ENCODE measurements at regions of chr14 and their contacts with region 1.

Region 1: DNA sequence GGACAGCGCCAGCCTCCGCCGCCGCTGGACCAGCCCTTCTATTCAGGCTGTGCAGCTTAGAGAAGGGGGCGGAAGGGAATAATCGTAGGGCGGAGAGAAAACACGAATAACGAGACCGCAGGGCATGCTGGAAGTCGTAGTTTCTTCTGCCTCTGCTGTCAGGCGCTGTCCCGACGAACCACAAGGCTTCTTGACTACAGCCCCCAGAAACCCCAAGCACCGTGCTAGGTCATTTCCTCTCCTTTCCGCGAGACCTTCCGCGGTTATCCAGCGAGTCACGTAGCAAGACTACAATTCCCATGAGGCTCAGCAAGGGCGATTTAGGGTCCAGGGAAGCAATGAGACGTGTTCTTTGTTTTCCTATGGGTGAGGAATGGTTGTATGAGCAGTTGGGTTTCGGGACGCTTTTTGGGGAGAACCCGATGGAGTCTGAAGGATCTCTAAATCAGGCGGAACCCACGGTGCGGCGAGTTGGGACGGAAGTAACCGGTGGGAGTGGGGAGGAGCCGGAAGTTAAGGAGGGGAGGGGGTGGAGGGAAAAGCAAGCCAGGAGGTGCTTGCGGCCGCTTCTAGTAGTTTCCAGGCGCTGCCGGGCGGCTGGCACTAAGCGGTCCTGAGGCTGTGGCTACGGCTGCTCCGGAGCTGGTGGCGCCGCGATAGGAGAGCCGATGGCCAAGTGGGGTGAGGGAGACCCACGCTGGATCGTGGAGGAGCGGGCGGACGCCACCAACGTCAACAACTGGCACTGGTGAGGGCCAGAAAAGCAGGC is at the starts of genes AHSA1 and VIPAS39:
- DNase-seq: peak; percentile 99
- H3K4me3 ChIP-seq: peak within 1 kb of the TSS; percentile 95
- H3K27ac ChIP-seq: peak within 1 kb of the TSS; percentile 66
- H3K4me1 ChIP-seq: peaks cover 27% of the 10 kb centered on the region
- CTCF ChIP-seq: no peak
- total RNA-seq, gene AHSA1: 182 and 230 TPM in 2 replicates
- total RNA-seq, gene VIPAS39: 11.4 and 13.3 TPM in 2 replicates

Region 2: GRCh38 chr14:77320238-77320935 is 137.3 kb before region 1 on chr14 and contains the start of gene POMT2:
- CTCF ChIA-PET with region 1: no interaction called
- POLR2A ChIA-PET with region 1: interaction called, 3 read pairs
- intact Hi-C with region 1: loop called (anchors 1 kb)
- DNase-seq: peak; percentile 92
- H3K4me3 ChIP-seq: peak within 1 kb of the TSS; percentile 81
- H3K27ac ChIP-seq: peak within 1 kb of the TSS; percentile 80
- H3K4me1 ChIP-seq: peaks cover 25% of the 10 kb centered on the region
- CTCF ChIP-seq: peak; percentile 51; the same call in 1 of the 2 replicates
- total RNA-seq, gene POMT2: 5.9 and 8.2 TPM in 2 replicates

Region 3: DNA sequence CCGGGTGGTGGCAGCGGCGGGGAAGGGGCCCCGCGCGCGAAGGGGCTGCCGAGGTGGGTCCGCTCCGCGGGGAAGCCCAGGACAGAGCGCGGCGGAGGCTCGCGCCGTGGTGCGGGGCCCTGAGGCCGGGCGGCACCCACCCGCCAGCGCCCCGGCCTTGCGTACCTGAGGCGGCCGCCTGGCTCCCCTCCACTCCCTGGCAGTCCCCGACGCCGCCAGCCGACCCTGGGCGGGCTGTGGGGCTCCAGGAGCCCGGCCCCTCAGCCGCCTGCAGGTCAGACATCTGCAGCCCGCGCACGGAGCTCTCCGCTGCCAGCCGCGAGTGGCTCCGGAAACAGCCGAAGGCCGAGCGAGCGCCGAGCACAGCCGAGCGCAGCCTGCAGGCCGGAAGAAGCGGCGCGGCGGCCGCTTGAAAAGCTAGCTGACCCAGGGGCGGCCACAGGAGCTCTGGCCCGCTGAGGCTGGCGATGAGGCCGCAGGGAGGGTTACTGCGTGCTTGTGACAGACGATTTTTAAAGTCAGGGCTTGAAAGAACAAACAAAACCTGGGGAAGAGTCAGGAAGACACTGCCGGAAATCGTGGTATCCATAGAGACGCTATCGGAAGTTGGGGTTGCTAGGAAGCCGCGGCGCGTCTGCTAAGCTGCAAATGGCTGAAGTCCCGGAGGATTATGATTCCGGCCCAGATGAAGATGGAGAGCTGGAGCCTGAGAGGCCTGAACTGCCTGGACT is 80.8 kb before region 1 on chr14 and contains the starts of genes SAMD15 and TMED8:
- CTCF ChIA-PET with region 1: no interaction called
- POLR2A ChIA-PET with region 1: interaction called, 6 read pairs
- intact Hi-C with region 1: loop called (anchors 5 kb)
- DNase-seq: peak; percentile 87
- H3K4me3 ChIP-seq: peak within 1 kb of the TSS; percentile 87
- H3K27ac ChIP-seq: peak within 1 kb of the TSS; percentile 96
- H3K4me1 ChIP-seq: peaks cover 32% of the 10 kb centered on the region
- CTCF ChIP-seq: peak; percentile 31; the same call in 1 of the 2 replicates
- total RNA-seq, gene SAMD15: 1.1 and 1.6 TPM in 2 replicates
- total RNA-seq, gene TMED8: 19.5 and 21.9 TPM in 2 replicates

Region 4: DNA sequence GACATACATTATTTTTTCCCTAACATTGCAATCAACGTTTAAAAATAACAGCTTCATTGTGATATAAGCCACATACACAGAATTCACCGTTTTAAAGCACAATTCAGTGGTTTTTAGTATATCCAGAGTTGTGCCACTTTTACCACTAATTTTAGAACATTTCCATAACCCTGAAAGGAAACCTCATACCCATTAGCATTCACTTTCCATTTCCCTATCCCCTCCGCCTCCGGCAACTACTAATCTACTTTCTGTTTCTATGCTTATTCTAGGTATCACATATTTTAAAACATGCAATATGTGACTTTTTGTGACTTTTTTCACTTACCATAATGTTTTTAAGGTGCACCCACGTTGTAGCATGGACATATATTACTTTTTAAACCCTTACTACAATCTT is 96.5 kb after region 1 on chr14:
- CTCF ChIA-PET with region 1: interaction called, 5 read pairs
- POLR2A ChIA-PET with region 1: interaction called, 4 read pairs
- intact Hi-C with region 1: loop called (anchors 2 kb)
- DNase-seq: no peak
- H3K4me3 ChIP-seq: no peak overlapping the region
- H3K27ac ChIP-seq: no peak overlapping the region
- H3K4me1 ChIP-seq: no peaks in the 10 kb centered on the region
- CTCF ChIP-seq: no peak

Region 5: DNA sequence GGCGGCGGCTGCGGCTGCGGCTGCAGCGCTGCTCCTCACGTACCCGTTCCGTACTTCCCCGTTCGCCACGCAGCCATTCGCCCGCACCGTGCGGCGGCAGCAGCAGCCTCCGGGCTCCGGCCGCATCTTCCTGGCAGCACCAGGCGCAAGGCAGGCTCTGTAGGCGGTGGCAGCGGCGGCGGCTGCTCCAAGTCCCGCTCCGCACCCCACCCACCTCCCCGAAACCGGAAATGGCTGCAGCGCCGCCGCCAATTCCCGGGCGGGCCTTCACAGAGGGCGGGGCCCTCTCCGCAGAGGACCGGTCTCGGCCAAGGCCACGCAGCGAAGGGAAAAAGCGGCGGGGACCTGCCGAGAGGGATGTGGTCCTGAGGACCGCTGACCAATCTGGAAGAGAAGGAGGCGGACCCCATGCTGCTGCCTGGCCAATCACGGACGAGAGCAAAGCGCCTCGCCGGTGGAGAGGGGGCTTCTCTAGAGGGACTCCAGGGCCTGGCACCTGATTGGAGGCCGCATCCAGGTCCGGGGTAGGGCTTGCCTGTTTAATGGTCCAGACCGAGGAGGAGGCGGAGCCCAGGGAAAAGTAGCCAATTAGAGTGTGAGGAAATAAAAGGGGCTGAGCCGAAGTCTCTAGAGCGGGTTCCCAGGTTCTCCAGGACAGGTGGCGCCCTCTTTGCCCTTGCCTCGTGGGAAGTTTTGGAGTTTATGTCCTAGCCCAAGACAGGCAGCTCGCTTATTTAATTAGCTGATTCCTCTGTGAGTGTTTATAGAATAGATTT is 158.9 kb after region 1 on chr14 and contains the start of gene SPTLC2:
- CTCF ChIA-PET with region 1: no interaction called
- POLR2A ChIA-PET with region 1: no interaction called
- intact Hi-C with region 1: loop called (anchors 2 kb)
- DNase-seq: peak; percentile 99
- H3K4me3 ChIP-seq: peak within 1 kb of the TSS; percentile 95
- H3K27ac ChIP-seq: peak within 1 kb of the TSS; percentile 42
- H3K4me1 ChIP-seq: peaks cover 40% of the 10 kb centered on the region
- CTCF ChIP-seq: peak; percentile 70
- total RNA-seq, gene SPTLC2: 14.7 and 19.6 TPM in 2 replicates

Region 6: DNA sequence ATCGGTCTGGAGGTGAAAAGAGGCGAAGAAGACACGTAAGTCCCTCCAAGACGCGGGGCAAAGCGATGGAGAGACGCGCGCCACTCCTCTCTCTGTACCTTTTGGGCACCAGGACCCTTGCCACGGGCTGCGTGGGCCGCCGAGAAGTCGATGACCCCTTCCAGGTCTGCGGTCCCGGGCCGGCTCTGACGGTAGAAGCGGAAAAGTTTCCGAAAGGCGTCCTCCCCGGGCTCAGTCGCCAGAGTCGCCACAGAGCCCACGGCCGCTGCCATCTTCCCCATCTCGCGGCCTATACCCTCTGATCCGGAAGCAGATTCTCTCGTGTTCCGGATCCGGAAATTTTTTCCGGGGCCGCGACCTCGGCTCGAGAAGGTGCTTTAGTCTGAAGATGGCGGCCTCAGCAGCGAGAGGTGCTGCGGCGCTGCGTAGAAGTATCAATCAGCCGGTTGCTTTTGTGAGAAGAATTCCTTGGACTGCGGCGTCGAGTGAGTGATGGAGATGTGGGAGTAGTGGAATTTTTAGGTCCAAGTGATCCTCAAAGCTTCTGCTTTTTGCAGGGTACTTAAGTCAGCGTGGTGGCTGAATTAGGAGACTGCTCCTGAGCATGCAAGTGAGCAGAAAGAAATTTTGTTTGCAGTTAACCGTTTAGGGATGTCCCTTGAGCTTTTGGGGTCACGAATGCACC is 250.2 kb after region 1 on chr14 and contains the starts of genes ALKBH1 and SLIRP:
- CTCF ChIA-PET with region 1: no interaction called
- POLR2A ChIA-PET with region 1: no interaction called
- intact Hi-C with region 1: loop called (anchors 2 kb)
- DNase-seq: peak; percentile 87
- H3K4me3 ChIP-seq: peak within 1 kb of the TSS; percentile 85
- H3K27ac ChIP-seq: peak within 1 kb of the TSS; percentile 41
- H3K4me1 ChIP-seq: peaks cover 31% of the 10 kb centered on the region
- CTCF ChIP-seq: no peak
- total RNA-seq, gene ALKBH1: 10.0 and 12.6 TPM in 2 replicates
- total RNA-seq, gene SLIRP: 147 and 252 TPM in 2 replicates

Region 7: GRCh38 chr14:77799863-77800730 is 342.4 kb after region 1 on chr14 and contains the start of gene ADCK1:
- CTCF ChIA-PET with region 1: no interaction called
- POLR2A ChIA-PET with region 1: no interaction called
- intact Hi-C with region 1: loop called (anchors 5 kb)
- DNase-seq: peak; percentile 91
- H3K4me3 ChIP-seq: peak within 1 kb of the TSS; percentile 76
- H3K27ac ChIP-seq: peak within 1 kb of the TSS; percentile 32
- H3K4me1 ChIP-seq: peaks cover 30% of the 10 kb centered on the region
- CTCF ChIP-seq: peak; percentile 33; the same call in 1 of the 2 replicates
- total RNA-seq, gene ADCK1: 5.9 and 7.5 TPM in 2 replicates